CD14-positive monocyte (primary cell): ENCODE measurements at regions of chr16 and their contacts with region 1.

Region 1: GRCh38 chr16:27332105-27332504 is 18.3 kb downstream of the IL4R start:
- DNase-seq: peak; percentile 84 to 89 (median 85)
- H3K4me3 ChIP-seq: no peak overlapping the region
- H3K4me3 Mint-ChIP-seq: no peak overlapping the region
- H3K27ac ChIP-seq: peak overlapping the region; percentile 29 to 70
- H3K27ac Mint-ChIP-seq: peak overlapping the region; percentile 82 to 98 (median 91)
- H3K4me1 ChIP-seq: peaks cover 16 to 44% of the 10 kb centered on the region in 2 donors
- H3K4me1 Mint-ChIP-seq: peaks cover 41% of the 10 kb centered on the region
- H3K27me3 ChIP-seq: no peaks in the 10 kb centered on the region
- H3K27me3 Mint-ChIP-seq: peaks cover 0 to 2% (median 0%) of the 10 kb centered on the region in 3 donors
- CTCF ChIP-seq: no peak

Region 2: DNA sequence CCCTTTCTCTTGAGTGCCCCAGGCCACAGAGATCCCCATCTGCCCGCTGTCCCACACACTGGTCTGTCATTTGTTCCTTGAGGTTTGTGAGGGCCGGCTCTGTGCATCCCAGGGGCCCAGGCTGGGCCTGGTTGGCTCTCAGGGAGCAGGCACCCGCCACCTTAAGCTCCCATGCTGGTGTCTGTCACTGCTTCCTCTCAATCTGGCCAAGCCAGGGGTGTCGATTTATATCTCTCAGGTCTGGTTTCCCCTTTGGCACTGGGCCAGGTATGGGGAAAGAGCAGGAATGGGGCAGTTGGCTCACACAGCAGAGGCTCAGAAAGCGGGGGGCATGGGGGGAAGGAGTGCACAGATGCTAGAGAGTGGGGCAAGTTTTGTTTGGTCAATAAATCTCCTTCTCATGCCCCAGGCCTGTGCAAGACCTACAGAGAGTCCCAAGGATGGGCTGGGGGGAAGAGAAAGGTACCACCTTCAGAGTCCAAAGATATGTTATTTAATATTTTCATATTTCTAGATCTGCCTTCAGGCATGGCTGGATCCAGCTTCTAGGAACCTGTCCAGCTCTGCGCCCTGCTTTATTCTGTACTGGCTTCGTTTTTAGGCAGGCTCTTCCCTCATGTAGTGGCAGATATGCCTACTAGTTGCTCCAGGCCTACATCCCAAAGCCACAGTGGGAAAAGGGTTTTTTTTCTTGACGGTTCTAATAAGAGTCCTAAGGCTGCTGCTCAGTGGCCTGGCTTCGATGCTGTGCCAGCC is 16.0 kb after region 1 on chr16:
- intact Hi-C with region 1: loop called in 1 of 2 experiments (anchors 2 kb)
- DNase-seq: peak in 2 of 3 donors; percentile 29 to 41
- H3K4me3 ChIP-seq: no peak overlapping the region
- H3K4me3 Mint-ChIP-seq: no peak overlapping the region
- H3K27ac ChIP-seq: peak overlapping the region in 1 of 2 donors; percentile 82
- H3K27ac Mint-ChIP-seq: peak overlapping the region; percentile 54 to 93 (median 79)
- H3K4me1 ChIP-seq: peaks cover 18 to 25% of the 10 kb centered on the region in 2 donors
- H3K4me1 Mint-ChIP-seq: peaks cover 22% of the 10 kb centered on the region
- H3K27me3 ChIP-seq: no peaks in the 10 kb centered on the region
- H3K27me3 Mint-ChIP-seq: peaks cover 0 to 2% (median 0%) of the 10 kb centered on the region in 3 donors
- CTCF ChIP-seq: no peak

Region 3: DNA sequence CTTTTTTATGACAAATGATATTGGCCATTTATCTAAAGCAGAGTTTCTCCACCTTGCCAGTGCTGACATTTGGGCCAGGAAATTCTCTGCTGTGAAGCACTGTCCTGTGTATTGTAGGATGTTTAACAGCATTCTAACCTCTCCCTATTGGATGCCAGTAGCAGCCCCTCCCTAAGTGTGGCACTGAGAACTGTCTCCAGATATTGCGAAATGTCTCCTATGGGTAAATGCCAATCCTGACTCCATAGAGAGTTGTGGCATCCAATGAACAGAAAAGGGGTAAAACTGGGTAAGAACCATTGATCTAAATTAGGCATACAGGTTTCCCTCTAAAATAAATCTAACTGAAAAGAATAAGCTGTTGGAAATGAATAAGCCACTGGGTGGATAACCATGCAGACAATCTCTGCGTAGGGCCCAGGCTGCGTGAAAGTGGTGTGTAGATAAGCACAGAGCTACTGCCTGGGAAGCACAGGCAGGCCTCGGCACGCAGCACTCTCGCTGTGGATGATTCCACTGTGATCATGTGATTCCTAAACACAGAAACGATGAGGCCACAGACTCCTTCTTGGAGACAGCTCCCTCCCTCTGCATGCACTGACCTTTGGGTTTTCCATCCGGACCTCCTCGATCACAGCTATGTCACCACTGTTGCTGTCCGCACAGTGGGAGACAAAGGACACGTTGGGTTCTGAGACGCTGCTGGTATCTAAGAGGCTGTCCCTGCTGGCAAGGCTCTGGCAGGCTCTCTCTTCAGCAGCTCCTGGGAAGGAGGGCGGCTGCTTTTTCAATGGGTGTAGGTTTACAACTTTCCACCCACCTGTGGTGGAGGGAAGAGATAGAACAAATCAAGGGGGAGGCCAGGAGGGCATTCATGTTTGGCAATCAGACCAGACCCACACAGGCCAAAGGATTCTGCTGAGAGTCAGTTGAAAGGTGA is 173.5 kb after region 1 on chr16:
- intact Hi-C with region 1: no loop called
- DNase-seq: no peak
- H3K4me3 ChIP-seq: no peak overlapping the region
- H3K4me3 Mint-ChIP-seq: no peak overlapping the region
- H3K27ac ChIP-seq: no peak overlapping the region
- H3K27ac Mint-ChIP-seq: peak overlapping the region in 2 of 7 donors; percentile 36 to 77
- H3K4me1 ChIP-seq: no peaks in the 10 kb centered on the region
- H3K4me1 Mint-ChIP-seq: no peaks in the 10 kb centered on the region
- H3K27me3 ChIP-seq: no peaks in the 10 kb centered on the region
- H3K27me3 Mint-ChIP-seq: peaks cover 0 to 3% (median 1%) of the 10 kb centered on the region in 3 donors
- CTCF ChIP-seq: no peak